ENCODE measurements at regions of chr1 and their contacts with region 1.

Region 1: GRCh38 chr1:27772933-27773825 is at the start of gene STX12:
- DNase-seq: peak; percentile 100
- ATAC-seq: peak; percentile 95
- H3K4me3 ChIP-seq: peak within 1 kb of the TSS; percentile 95
- H3K27ac ChIP-seq: peak within 1 kb of the TSS; percentile 76
- H3K4me1 ChIP-seq: peaks cover 4% of the 10 kb centered on the region; the same call in 1 of the 2 replicates
- H3K27me3 ChIP-seq: no peaks in the 10 kb centered on the region
- CTCF ChIP-seq: no peak
- POLR2A ChIP-seq: peak; percentile 93
- RAD21 ChIP-seq: no peak; the same call in 1 of the 2 replicates
- total RNA-seq, gene STX12: 54.8 and 68.3 TPM in 2 replicates

Region 2: DNA sequence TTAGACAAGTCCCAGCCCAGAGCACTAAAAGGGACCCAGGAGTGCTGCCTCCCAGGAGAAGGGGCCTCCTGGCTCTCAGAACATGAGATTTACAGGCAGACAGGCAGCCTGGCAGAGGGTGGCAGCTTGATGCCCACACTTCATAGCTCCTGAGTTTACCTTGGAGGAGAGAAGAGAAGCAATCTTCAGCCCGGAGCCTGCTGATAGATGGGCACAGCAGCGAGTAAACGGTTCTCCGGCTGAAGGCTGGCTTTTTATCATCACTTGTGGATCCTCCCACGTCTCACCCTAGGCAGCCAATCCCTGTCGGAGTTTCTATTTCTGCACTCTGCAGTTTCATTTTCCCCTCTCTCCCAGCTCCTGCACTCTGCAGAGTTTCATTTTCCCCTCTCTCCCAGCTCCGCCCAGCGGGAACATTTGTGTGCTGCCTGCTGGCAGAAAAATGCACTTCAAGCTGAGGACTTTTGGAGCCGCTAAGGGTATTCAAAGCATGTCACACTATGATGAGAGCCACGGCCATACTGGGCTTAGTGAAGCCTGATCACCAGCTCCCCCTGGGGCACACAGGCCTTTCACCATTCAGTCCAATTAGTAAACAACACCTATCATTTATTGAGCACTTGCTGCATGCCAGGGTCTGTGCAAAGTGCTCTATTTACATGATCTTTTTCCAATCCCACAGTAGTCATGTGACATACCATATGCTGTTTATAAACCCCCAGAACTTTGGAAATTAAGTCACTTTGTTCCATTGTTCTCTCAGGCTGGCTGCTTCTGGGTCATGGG is 101.0 kb before region 1 on chr1 and contains the start of gene IFI6:
- CTCF ChIA-PET with region 1: no interaction called
- POLR2A ChIA-PET with region 1: interaction called, 3 read pairs
- dilution Hi-C with region 1: no loop called
- in situ Hi-C with region 1: no loop called
- intact Hi-C with region 1: loop called (anchors 1 kb)
- DNase-seq: peak; percentile 95
- ATAC-seq: peak; percentile 98
- H3K4me3 ChIP-seq: peak within 1 kb of the TSS; percentile 53
- H3K27ac ChIP-seq: peak within 1 kb of the TSS; percentile 58
- H3K4me1 ChIP-seq: peaks cover 5% of the 10 kb centered on the region
- H3K27me3 ChIP-seq: peaks cover 2% of the 10 kb centered on the region; the same call in 1 of the 2 replicates
- CTCF ChIP-seq: peak; percentile 44
- POLR2A ChIP-seq: peak; percentile 79
- RAD21 ChIP-seq: peak; percentile 15; the same call in 1 of the 2 replicates
- total RNA-seq, gene IFI6: 6.7 and 7.3 TPM in 2 replicates

Region 3: GRCh38 chr1:27725374-27726173 is 47.6 kb before region 1 on chr1 and contains the start of gene FAM76A:
- CTCF ChIA-PET with region 1: interaction called, 5 read pairs
- POLR2A ChIA-PET with region 1: interaction called, 11 read pairs
- dilution Hi-C with region 1: no loop called
- in situ Hi-C with region 1: no loop called
- intact Hi-C with region 1: loop called (anchors 2 kb)
- DNase-seq: peak; percentile 99
- ATAC-seq: peak; percentile 99
- H3K4me3 ChIP-seq: peak within 1 kb of the TSS; percentile 74
- H3K27ac ChIP-seq: peak within 1 kb of the TSS; percentile 43
- H3K4me1 ChIP-seq: no peaks in the 10 kb centered on the region
- H3K27me3 ChIP-seq: peaks cover 2% of the 10 kb centered on the region; the same call in 1 of the 2 replicates
- CTCF ChIP-seq: peak; percentile 63
- POLR2A ChIP-seq: peak; percentile 72
- RAD21 ChIP-seq: no peak
- total RNA-seq, gene FAM76A: 8.6 and 10.0 TPM in 2 replicates

Region 4: GRCh38 chr1:27752360-27752759 is 20.8 kb before region 1 on chr1:
- CTCF ChIA-PET with region 1: no interaction called
- POLR2A ChIA-PET with region 1: no interaction called
- dilution Hi-C with region 1: no loop called
- in situ Hi-C with region 1: no loop called
- intact Hi-C with region 1: loop called (anchors 1 kb)
- DNase-seq: peak; percentile 43
- ATAC-seq: peak; percentile 53
- H3K4me3 ChIP-seq: no peak overlapping the region
- H3K27ac ChIP-seq: 0 out of 2 replicates have a peak overlapping the region, but pooled peaks have one; percentile 50
- H3K4me1 ChIP-seq: peaks cover 10% of the 10 kb centered on the region
- H3K27me3 ChIP-seq: no peaks in the 10 kb centered on the region
- CTCF ChIP-seq: no peak
- POLR2A ChIP-seq: no peak
- RAD21 ChIP-seq: no peak

Region 5: GRCh38 chr1:27830621-27831424 is 57.6 kb after region 1 on chr1 and contains the start of gene PPP1R8:
- CTCF ChIA-PET with region 1: no interaction called
- POLR2A ChIA-PET with region 1: interaction called, 3 read pairs
- dilution Hi-C with region 1: no loop called
- in situ Hi-C with region 1: no loop called
- intact Hi-C with region 1: loop called (anchors 2 kb)
- DNase-seq: peak; percentile 95
- ATAC-seq: peak; percentile 99
- H3K4me3 ChIP-seq: peak within 1 kb of the TSS; percentile 98
- H3K27ac ChIP-seq: peak within 1 kb of the TSS; percentile 91
- H3K4me1 ChIP-seq: peaks cover 7% of the 10 kb centered on the region; the same call in 1 of the 2 replicates
- H3K27me3 ChIP-seq: no peaks in the 10 kb centered on the region
- CTCF ChIP-seq: no peak
- POLR2A ChIP-seq: peak; percentile 96
- RAD21 ChIP-seq: no peak
- total RNA-seq, gene PPP1R8: 60.5 and 80.1 TPM in 2 replicates